HepG2 (cell line): ENCODE measurements at regions of chr11 and their contacts with region 1.

Region 1: GRCh38 chr11:61747192-61747966 is 5.1 kb upstream of the MYRF start:
- DNase-seq: peak; percentile 67
- ATAC-seq: peak; percentile 85
- H3K4me3 ChIP-seq: peak overlapping the region; percentile 22 to 68 (median 43)
- H3K27ac ChIP-seq: no peak overlapping the region
- H3K4me1 ChIP-seq: peaks cover 54% of the 10 kb centered on the region
- H3K27me3 ChIP-seq: no peaks in the 10 kb centered on the region
- CTCF ChIP-seq: peak; percentile 99
- EP300 ChIP-seq: no peak
- POLR2A ChIP-seq: no peak
- RAD21 ChIP-seq: peak; percentile 97

Region 2: GRCh38 chr11:61645179-61645868 is 102.1 kb before region 1 on chr11:
- CTCF ChIA-PET with region 1: no interaction called
- POLR2A ChIA-PET with region 1: no interaction called
- in situ Hi-C with region 1: no loop called
- intact Hi-C with region 1: no loop called
- DNase-seq: no peak
- ATAC-seq: peak; percentile 56
- H3K4me3 ChIP-seq: peak overlapping the region in 2 of 3 experiments; percentile 4 to 20; a peak in 1 of 6 replicates
- H3K27ac ChIP-seq: no peak overlapping the region
- H3K4me1 ChIP-seq: peaks cover 8% of the 10 kb centered on the region; the same call in 1 of the 2 replicates
- H3K27me3 ChIP-seq: peaks cover 0 to 15% of the 10 kb centered on the region in 2 experiments; a peak in 3 of 5 replicates
- CTCF ChIP-seq: no peak
- EP300 ChIP-seq: no peak
- POLR2A ChIP-seq: no peak
- RAD21 ChIP-seq: no peak

Region 3: GRCh38 chr11:61769169-61769920 is 22.0 kb after region 1 on chr11:
- CTCF ChIA-PET with region 1: interaction called, 47 read pairs
- POLR2A ChIA-PET with region 1: interaction called, 38 read pairs
- in situ Hi-C with region 1: no loop called
- intact Hi-C with region 1: loop called (anchors 2 kb)
- DNase-seq: peak; percentile 90
- ATAC-seq: peak; percentile 90
- H3K4me3 ChIP-seq: peak overlapping the region; percentile 46 to 66 (median 56); a peak in 5 of 6 replicates
- H3K27ac ChIP-seq: peak overlapping the region; percentile 91
- H3K4me1 ChIP-seq: peaks cover 81% of the 10 kb centered on the region
- H3K27me3 ChIP-seq: no peaks in the 10 kb centered on the region; a peak in 1 of 5 replicates
- CTCF ChIP-seq: peak; percentile 85
- EP300 ChIP-seq: peak; percentile 58 to 83; a peak in 3 of 4 replicates
- POLR2A ChIP-seq: peak in 1 of 2 experiments; percentile 30; a peak in 1 of 4 replicates
- RAD21 ChIP-seq: peak; percentile 91

Region 4: GRCh38 chr11:61776551-61777075 is 29.2 kb after region 1 on chr11:
- CTCF ChIA-PET with region 1: interaction called, 51 read pairs
- POLR2A ChIA-PET with region 1: interaction called, 13 read pairs
- in situ Hi-C with region 1: loop called (anchors 5 kb)
- intact Hi-C with region 1: loop called (anchors 1 kb)
- DNase-seq: peak; percentile 59
- ATAC-seq: peak; percentile 75
- H3K4me3 ChIP-seq: no peak overlapping the region
- H3K27ac ChIP-seq: no peak overlapping the region
- H3K4me1 ChIP-seq: peaks cover 13% of the 10 kb centered on the region
- H3K27me3 ChIP-seq: no peaks in the 10 kb centered on the region; a peak in 1 of 5 replicates
- CTCF ChIP-seq: peak; percentile 77
- EP300 ChIP-seq: no peak
- POLR2A ChIP-seq: no peak
- RAD21 ChIP-seq: peak; percentile 89

Region 5: DNA sequence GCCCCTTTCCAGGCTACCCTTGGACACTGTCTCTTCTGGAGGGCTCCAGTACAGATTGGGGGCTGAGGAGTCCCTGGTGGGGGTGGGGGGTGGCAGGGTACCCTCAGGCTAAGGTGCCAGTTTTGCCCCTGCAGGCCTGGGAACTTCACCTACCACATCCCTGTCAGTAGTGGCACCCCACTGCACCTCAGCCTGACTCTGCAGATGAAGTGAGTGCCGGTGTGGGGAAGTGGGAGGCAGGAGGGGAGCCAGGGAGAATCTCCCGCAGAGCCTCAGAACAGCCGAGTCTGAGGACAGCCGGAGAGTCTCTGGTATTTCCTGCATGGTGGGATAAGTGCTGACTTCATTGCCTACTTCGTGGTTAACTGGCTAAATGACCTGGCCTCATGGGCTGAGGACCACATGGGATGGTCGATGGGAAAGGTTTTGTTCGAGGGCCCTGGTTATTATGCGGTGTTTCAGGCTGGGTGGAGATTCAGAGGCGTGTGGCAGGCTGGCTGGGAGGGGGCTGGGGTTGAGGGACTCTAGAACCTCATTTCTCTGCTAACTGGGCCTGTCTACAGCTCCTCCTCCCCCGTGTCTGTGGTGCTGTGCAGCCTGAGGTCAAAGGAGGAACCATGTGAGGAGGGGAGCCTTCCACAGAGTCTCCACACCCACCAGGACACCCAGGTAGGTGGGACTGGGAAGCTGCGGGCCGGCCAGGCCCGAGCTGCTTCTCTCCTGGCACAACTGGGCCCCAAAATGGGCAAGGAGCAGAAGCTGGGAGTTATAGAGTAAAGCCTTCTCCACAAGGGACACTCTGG is 36.5 kb after region 1 on chr11:
- CTCF ChIA-PET with region 1: interaction called, 38 read pairs
- POLR2A ChIA-PET with region 1: interaction called, 9 read pairs
- in situ Hi-C with region 1: loop called (anchors 5 kb)
- intact Hi-C with region 1: loop called (anchors 1 kb)
- DNase-seq: no peak
- ATAC-seq: no peak
- H3K4me3 ChIP-seq: no peak overlapping the region
- H3K27ac ChIP-seq: no peak overlapping the region
- H3K4me1 ChIP-seq: peaks cover 5% of the 10 kb centered on the region; the same call in 1 of the 2 replicates
- H3K27me3 ChIP-seq: no peaks in the 10 kb centered on the region
- CTCF ChIP-seq: no peak
- EP300 ChIP-seq: no peak
- POLR2A ChIP-seq: no peak
- RAD21 ChIP-seq: no peak

Region 6: DNA sequence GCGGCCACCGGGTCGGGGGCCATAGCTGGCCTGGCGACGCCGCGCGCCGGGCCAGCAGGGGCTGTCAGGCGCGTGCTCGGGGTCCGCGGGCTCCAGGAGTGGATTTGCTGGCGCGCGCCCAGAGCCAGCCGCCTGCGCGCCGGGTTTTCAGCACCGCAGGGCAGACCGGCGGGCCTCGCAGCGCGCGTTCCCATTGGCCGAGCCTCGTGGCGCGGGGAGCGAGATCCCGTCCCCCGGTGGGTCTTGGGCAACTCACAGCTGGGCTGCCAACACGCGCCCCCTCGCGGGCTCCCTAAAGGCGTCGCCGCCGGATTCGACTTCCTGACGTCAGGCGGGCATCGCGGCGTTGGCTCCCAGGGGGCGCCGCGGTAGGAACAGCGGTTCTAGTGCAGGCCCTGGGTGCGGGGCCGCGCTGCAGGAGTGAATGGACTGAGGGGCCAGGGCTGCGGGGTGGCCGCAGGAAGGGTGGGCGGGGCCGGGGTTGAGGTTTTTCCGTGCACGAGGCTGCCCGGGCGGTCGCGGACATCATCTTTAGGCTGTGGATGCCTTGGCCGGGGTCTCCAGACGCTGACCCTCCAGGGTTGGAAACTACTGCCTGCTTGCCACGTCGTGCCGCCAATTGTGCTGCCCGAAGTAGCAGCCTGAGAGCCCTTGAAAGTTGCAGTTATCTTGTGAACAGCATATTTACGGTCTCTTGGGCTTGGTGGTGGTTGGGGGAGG is 69.5 kb after region 1 on chr11 and contains the start of gene FADS1:
- CTCF ChIA-PET with region 1: no interaction called
- POLR2A ChIA-PET with region 1: interaction called, 15 read pairs
- in situ Hi-C with region 1: no loop called
- intact Hi-C with region 1: no loop called
- DNase-seq: peak; percentile 95
- ATAC-seq: peak; percentile 71
- H3K4me3 ChIP-seq: peak within 1 kb of the TSS; percentile 74 to 94 (median 81)
- H3K27ac ChIP-seq: peak within 1 kb of the TSS; percentile 99
- H3K4me1 ChIP-seq: peaks cover 52% of the 10 kb centered on the region
- H3K27me3 ChIP-seq: no peaks in the 10 kb centered on the region; a peak in 1 of 5 replicates
- CTCF ChIP-seq: peak; percentile 95
- EP300 ChIP-seq: 0 out of 4 replicates have a peak, but pooled peaks of 1 of the 2 experiments have one; percentile 10
- POLR2A ChIP-seq: no peak
- RAD21 ChIP-seq: peak; percentile 74; the same call in 1 of the 2 replicates
- total RNA-seq, gene FADS1: 65.8 and 108 TPM in 2 replicates